ENCODE measurements at regions of chr3 and their contacts with region 1.

Region 1: GRCh38 chr3:115092220-115092791 is 54.8 kb downstream of the ZBTB20 start:
- DNase-seq: peak; percentile 74
- ATAC-seq: peak; percentile 44
- H3K4me3 Mint-ChIP-seq: no peak overlapping the region
- H3K27ac Mint-ChIP-seq: no peak overlapping the region
- H3K4me1 Mint-ChIP-seq: peaks cover 41% of the 10 kb centered on the region
- H3K27me3 Mint-ChIP-seq: no peaks in the 10 kb centered on the region

Region 2: DNA sequence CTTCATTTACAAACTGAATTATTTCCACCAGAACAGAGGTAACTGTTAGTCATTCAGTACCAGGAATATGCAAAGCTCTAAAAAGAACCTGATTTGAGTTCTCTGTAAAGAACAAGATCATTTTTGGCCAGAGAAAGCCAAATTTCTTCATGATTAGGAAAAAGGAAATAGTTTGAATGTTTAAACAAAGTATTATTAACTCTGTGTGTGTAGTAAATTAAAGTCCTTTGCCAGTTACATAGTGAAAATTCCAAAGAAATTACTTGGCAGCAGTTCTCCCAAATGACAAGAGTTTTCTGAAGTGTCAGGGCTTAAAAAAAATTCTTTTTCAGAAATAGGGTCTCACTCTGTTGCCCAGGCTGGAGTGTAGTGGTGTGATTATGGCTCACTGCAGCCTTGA is 1011.3 kb before region 1 on chr3:
- CTCF ChIA-PET with region 1: no interaction called
- POLR2A ChIA-PET with region 1: no interaction called
- intact Hi-C with region 1: no loop called
- DNase-seq: no peak
- ATAC-seq: no peak
- H3K4me3 Mint-ChIP-seq: no peak overlapping the region
- H3K27ac Mint-ChIP-seq: no peak overlapping the region
- H3K4me1 Mint-ChIP-seq: no peaks in the 10 kb centered on the region
- H3K27me3 Mint-ChIP-seq: no peaks in the 10 kb centered on the region

Region 3: DNA sequence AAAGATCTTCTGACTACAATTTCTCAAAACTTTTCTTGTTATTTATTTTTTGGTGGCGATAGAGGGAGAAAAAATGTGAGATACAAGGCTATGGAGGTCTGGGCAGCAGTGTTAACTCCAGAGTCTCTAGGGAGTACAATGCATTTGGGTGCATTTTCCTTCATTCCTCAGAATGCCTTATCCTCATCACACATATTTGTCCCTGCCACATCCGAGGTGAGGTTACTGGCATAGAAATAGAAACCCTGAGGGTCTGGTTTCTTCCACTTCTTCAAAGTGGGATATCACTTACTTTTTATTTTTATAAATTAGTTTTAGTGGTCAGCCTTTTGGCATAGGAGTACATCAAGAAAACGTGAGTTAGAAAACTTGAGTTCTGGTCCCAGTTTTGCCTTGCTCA is 648.1 kb before region 1 on chr3:
- CTCF ChIA-PET with region 1: no interaction called
- POLR2A ChIA-PET with region 1: no interaction called
- intact Hi-C with region 1: no loop called
- DNase-seq: no peak
- ATAC-seq: no peak
- H3K4me3 Mint-ChIP-seq: no peak overlapping the region
- H3K27ac Mint-ChIP-seq: no peak overlapping the region
- H3K4me1 Mint-ChIP-seq: peaks cover 3% of the 10 kb centered on the region
- H3K27me3 Mint-ChIP-seq: no peaks in the 10 kb centered on the region

Region 4: GRCh38 chr3:114565216-114565615 is 527.1 kb before region 1 on chr3:
- CTCF ChIA-PET with region 1: no interaction called
- POLR2A ChIA-PET with region 1: no interaction called
- intact Hi-C with region 1: no loop called
- DNase-seq: no peak
- ATAC-seq: no peak
- H3K4me3 Mint-ChIP-seq: no peak overlapping the region
- H3K27ac Mint-ChIP-seq: no peak overlapping the region
- H3K4me1 Mint-ChIP-seq: peaks cover 6% of the 10 kb centered on the region
- H3K27me3 Mint-ChIP-seq: no peaks in the 10 kb centered on the region

Region 5: DNA sequence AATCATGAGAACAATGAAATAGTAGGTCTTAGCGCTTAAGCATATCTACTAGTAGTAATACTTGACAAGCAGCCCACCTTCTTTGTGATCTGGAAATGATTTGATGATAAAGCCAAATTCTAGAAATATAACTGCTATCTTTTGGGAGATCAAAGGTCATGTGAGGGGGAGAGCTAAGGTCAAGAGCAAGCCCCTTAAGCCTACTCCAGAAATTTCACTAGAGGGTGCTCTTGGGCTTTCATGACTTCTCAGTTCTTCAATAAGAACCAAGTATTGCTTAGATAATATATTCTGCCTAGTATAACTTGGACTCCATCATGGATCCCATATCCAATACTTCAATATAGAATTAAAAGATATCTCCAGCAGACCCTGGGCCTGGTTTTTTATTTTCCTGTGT is 264.8 kb before region 1 on chr3:
- CTCF ChIA-PET with region 1: interaction called, 5 read pairs
- POLR2A ChIA-PET with region 1: no interaction called
- intact Hi-C with region 1: loop called in 1 of 2 experiments (anchors 5 kb)
- DNase-seq: peak; percentile 12
- ATAC-seq: peak; percentile 63
- H3K4me3 Mint-ChIP-seq: no peak overlapping the region
- H3K27ac Mint-ChIP-seq: no peak overlapping the region
- H3K4me1 Mint-ChIP-seq: peaks cover 5% of the 10 kb centered on the region
- H3K27me3 Mint-ChIP-seq: no peaks in the 10 kb centered on the region

Region 6: DNA sequence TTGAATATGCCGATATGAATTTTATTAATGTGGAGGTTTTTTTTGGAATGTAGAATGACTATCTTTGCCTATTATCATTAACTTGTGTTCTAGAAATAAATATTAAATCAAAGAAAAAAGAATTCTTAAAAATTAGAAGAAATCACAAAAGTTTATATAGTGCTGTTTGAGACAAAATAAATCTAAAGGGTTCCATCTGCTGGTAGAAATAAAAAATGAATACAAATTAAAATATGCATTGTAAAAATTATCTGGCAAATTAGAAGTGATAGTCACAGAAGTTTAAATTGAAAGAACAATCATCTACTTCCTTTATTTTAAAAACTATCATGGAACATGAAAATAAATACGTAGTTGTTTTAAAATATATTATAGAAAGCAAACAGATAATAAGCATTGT is 77.5 kb after region 1 on chr3:
- CTCF ChIA-PET with region 1: interaction called, 15 read pairs
- POLR2A ChIA-PET with region 1: no interaction called
- intact Hi-C with region 1: loop called (anchors 1 kb)
- DNase-seq: no peak
- ATAC-seq: no peak
- H3K4me3 Mint-ChIP-seq: no peak overlapping the region
- H3K27ac Mint-ChIP-seq: no peak overlapping the region
- H3K4me1 Mint-ChIP-seq: peaks cover 12% of the 10 kb centered on the region
- H3K27me3 Mint-ChIP-seq: no peaks in the 10 kb centered on the region

Region 7: DNA sequence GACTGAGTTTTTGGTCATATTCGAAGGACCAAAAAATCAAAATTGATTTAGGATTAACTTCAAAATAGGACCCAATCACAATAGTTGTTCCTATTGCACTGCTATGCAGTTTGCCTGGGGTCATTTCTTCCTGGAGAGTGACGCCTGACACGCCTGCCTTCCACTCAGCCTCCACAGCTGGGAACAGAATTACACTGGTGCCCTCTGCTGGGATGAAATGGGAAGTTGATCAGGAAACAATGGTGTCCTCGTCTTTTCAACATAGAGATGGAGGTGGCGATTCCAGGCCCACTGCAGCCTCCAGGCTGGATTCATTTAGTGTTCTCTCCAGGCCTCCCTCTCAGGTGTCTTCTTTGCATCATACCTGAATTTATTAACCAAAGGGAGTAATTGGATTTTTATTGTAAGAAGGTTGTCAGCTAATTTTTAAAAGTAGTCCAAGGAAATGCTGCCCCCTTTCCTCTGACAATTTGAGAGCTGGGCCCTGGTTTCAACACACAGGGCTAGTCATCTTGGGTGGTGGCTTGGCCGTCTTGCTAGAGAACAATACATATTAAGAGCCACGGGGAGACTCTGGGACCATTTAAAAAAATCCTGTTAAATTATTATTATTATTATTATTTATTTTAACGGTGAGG is 600.7 kb after region 1 on chr3:
- CTCF ChIA-PET with region 1: interaction called, 4 read pairs
- POLR2A ChIA-PET with region 1: no interaction called
- intact Hi-C with region 1: loop called (anchors 1 kb)
- DNase-seq: peak; percentile 81
- ATAC-seq: peak; percentile 81
- H3K4me3 Mint-ChIP-seq: no peak overlapping the region
- H3K27ac Mint-ChIP-seq: no peak overlapping the region
- H3K4me1 Mint-ChIP-seq: no peaks in the 10 kb centered on the region
- H3K27me3 Mint-ChIP-seq: peaks cover 6% of the 10 kb centered on the region

Region 8: DNA sequence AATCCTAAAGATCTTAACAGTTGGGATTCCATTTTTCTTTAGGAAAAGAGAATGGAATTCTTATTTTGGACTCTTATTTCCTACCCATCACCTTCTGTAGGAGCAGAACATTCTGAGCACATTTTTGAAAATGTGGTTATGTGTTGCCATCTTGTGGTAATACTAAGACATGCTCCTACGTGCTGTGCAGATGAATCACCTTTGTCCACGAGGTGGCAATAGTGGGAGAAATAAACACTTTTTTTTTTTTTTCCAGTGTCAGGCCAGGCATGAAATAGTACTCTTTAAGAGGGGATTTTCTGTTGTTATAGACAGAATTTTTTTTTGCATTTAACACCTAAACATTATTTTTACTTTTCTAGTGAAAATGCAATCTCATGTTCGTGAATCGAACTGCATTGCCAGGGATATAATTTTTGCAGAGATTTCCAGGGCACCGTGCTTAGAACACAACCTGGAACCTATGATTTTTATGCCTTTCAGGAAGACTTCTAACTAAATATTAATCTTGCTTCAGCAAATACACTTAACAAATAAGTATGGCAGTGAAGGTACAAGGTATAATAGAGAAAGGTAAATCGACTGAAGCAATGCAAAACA is 727.6 kb after region 1 on chr3:
- CTCF ChIA-PET with region 1: interaction called, 8 read pairs
- POLR2A ChIA-PET with region 1: no interaction called
- intact Hi-C with region 1: loop called (anchors 1 to 2 kb)
- DNase-seq: peak; percentile 68
- ATAC-seq: peak; percentile 90
- H3K4me3 Mint-ChIP-seq: no peak overlapping the region
- H3K27ac Mint-ChIP-seq: no peak overlapping the region
- H3K4me1 Mint-ChIP-seq: no peaks in the 10 kb centered on the region
- H3K27me3 Mint-ChIP-seq: no peaks in the 10 kb centered on the region

Measured in activated CD4-positive, alpha-beta T cell treated with anti-CD3 and anti-CD28 coated beads for 36 hours (primary cell).